AG04449 (cell line): ENCODE measurements at regions of chr22 and their contacts with region 1.

Region 1: DNA sequence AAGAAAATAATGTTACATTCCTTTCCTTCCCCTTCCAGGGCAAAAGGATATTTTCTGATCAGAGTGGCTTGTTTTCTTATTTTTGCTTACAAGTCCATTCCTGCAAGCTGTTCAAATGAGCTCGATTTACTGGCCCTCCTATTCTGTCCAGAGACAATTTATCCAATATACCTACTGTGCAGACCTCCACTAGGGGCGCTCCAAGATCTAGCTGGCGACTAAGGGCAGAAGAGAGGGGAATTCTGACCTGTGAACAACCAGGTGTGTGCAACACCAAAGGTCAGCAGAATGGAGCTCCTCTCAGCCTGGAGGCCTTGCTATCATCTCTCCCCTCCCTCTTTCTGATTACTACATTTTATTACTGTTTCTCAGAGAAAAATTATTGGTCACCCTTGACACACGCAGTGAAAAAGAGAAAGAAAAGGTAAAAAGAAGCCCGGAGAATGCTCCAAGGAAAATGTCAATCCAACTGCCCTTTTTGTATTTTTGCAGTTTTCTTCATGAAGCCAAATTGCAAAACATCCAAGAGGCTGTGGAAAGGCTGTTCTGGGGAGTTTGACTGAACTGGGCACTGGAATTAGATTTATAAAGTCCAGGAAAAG is 3.2 kb downstream of the SEZ6L start:
- DNase-seq: no peak
- H3K4me3 ChIP-seq: no peak overlapping the region
- CTCF ChIP-seq: peak; percentile 69

Region 2: DNA sequence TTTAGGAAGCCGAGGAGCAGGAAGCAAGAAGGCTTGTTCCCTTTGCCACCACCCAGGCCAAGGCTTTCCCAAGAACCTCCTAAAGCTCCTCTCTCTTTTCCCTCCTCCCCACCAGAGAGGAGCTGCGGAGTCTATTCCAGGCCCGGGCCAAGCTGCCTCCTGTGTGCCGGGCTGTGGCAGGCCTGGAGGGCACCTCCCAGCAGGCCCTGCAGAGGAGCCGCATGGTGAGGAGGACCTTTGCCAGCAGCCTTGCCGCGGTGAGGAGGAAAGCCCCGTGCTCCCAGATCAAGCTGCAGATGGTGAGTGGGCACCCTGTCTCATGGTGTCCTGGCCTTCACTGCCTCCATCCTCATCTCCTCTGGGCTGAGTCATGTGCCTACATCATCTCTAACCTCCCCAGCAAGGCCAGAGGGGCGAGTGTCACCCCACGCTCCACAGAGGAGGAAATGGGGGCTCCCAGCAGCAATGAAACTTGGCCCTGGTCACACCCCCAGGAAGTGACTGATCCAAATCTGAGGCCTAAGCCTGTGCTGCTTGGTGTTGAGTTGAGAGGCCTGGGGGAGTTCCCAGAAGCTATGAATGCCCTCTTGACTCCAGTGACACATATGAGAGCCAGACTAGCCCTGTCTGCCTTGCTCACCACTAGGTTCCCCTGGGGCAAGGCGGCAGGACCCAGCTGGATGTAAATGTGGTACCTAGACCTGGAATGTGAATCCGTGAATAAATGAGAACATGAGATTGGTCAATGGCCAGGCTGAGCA is 326.3 kb before region 1 on chr22:
- CTCF ChIA-PET with region 1: no interaction called
- POLR2A ChIA-PET with region 1: no interaction called
- DNase-seq: no peak
- H3K4me3 ChIP-seq: no peak overlapping the region
- CTCF ChIP-seq: no peak

Region 3: DNA sequence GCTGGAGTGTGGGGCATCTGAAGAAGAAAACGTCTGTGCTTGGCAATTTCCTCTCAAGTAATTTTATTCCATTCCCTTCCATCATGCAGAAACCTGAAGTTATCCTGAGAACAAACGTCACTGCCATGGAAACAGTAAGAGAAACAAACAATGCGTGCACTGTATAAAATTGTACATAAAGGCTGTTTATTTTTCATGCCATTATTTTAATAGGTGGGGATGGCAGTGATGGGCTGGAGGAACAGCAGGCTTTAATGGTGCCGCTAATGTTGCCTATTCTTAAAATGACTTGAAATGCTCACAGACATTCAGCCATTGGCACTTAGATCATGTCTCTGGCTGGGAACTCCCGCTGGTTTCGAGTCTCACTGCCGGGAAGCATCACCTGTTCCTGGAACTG is 10.7 kb before region 1 on chr22:
- CTCF ChIA-PET with region 1: interaction called, 11 read pairs
- POLR2A ChIA-PET with region 1: no interaction called
- DNase-seq: no peak
- H3K4me3 ChIP-seq: no peak overlapping the region
- CTCF ChIP-seq: no peak

Region 4: GRCh38 chr22:26182723-26183122 is 10.2 kb after region 1 on chr22:
- CTCF ChIA-PET with region 1: interaction called, 21 read pairs
- POLR2A ChIA-PET with region 1: no interaction called
- DNase-seq: no peak
- H3K4me3 ChIP-seq: no peak overlapping the region
- CTCF ChIP-seq: no peak

Region 5: DNA sequence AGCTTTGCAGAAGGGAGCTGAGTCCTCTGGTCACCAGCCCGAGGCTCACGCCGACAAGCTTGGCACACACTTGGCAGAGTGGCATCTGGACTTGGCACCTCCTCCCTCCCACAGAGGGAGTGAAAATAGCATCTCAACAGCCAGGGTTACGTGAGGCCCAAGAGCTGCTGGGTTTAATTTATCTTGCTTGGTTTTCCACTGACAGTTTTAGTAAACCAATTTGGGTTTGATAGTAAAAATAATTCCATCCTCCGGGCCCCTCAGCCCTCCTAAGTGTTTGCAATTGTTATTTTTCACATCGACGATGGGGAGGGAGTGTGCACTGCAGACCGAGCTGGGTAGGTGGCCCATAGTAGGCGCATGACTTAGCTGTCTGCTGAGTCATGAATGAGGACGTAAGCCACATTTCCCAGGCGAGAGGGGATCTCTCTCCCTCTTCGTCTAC is 149.0 kb after region 1 on chr22:
- CTCF ChIA-PET with region 1: interaction called, 16 read pairs
- POLR2A ChIA-PET with region 1: no interaction called
- DNase-seq: peak; percentile 90
- H3K4me3 ChIP-seq: no peak overlapping the region
- CTCF ChIP-seq: peak; percentile 7

Region 6: DNA sequence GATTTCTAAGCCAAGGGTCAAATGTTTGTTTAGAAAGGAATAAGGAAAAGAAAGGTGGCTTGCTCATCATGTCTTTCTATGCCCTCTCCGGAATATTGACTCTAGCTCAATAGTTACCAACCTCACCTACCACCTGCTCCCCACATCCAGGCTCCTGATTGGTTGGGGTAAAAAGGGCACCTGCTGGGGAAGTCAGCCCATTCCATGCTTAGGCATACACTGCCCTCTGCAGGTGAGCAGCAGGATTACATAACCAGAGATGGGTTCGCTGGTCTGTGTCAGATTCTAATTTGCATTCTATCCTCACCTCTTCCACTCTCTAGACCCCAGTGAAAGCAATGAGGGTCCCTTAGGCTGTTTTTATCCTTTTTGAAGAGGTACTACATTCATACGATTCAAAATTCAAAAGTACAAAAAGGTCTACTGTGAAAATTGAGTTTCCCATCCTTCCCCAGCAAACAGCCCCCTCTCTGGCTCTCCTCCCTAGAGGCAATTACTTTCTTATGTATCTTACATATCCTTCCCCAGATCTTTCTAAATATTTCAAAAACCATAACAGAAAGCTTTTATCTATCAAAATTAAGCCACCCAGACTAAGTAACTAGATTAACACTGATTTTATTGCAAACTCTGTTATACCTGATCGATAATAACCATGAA is 158.6 kb after region 1 on chr22:
- CTCF ChIA-PET with region 1: interaction called, 74 read pairs
- POLR2A ChIA-PET with region 1: no interaction called
- DNase-seq: no peak
- H3K4me3 ChIP-seq: no peak overlapping the region
- CTCF ChIP-seq: peak; percentile 90